Activated B cell treated with CpG ODN at 0.5 μM for 24 hours (primary cell): ENCODE measurements at regions of chr6 and their contacts with region 1.

Region 1: GRCh38 chr6:25223490-25223991 is 55.6 kb upstream of the CARMIL1 start:
- DNase-seq: peak; percentile 28
- ATAC-seq: peak; percentile 50
- H3K4me3 Mint-ChIP-seq: peak overlapping the region; percentile 65
- H3K27ac Mint-ChIP-seq: no peak overlapping the region
- H3K4me1 Mint-ChIP-seq: peaks cover 7% of the 10 kb centered on the region
- H3K27me3 Mint-ChIP-seq: peaks cover 5% of the 10 kb centered on the region
- CTCF ChIP-seq: peak; percentile 65

Region 2: DNA sequence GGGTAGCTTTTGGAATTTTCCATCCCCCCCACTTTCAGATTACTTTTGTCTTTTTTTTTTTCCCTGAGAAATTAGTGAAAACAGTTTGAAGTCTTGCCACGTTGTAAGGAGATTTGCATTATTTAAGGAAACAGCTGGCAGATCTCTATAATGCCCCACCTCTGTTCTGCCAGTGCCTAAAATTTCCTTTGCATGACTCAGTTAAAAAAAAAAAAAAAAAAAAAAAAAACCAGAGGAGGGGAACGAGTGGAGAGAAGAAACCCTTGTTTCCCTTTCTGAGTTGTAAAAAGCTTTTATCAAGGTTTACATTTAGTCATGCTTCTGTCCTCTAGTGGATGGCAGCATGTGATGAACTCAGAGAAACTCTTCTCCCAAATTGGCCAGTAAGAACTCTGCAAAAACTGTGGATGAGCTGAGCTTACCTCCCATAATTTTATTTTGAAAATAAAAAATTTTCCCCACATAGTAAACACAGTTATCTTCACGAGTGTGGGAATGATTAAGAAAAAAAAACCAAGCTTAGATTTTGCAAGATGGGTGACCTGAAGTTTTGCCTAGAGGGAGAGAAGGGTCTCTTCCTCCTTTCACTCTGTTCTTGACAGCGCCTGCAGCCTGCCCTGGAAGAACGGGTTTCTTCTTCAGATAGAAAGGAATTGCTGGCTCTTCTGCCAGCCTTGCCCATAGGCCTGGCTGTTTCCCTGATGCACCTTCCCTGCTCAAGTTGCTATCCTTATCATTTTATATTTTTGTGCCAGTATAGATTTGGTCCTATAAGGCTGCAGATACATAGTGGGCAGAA is 89.4 kb after region 1 on chr6:
- CTCF ChIA-PET with region 1: no interaction called
- POLR2A ChIA-PET with region 1: no interaction called
- intact Hi-C with region 1: no loop called
- DNase-seq: no peak
- ATAC-seq: no peak
- H3K4me3 Mint-ChIP-seq: no peak overlapping the region
- H3K27ac Mint-ChIP-seq: no peak overlapping the region
- H3K4me1 Mint-ChIP-seq: peaks cover 16% of the 10 kb centered on the region
- H3K27me3 Mint-ChIP-seq: no peaks in the 10 kb centered on the region
- CTCF ChIP-seq: no peak

Region 3: GRCh38 chr6:25490018-25490801 is 266.7 kb after region 1 on chr6:
- CTCF ChIA-PET with region 1: interaction called, 35 read pairs
- POLR2A ChIA-PET with region 1: no interaction called
- intact Hi-C with region 1: loop called (anchors 1 kb)
- DNase-seq: peak; percentile 43
- ATAC-seq: peak; percentile 81
- H3K4me3 Mint-ChIP-seq: no peak overlapping the region
- H3K27ac Mint-ChIP-seq: no peak overlapping the region
- H3K4me1 Mint-ChIP-seq: peaks cover 8% of the 10 kb centered on the region
- H3K27me3 Mint-ChIP-seq: no peaks in the 10 kb centered on the region
- CTCF ChIP-seq: no peak

Region 4: DNA sequence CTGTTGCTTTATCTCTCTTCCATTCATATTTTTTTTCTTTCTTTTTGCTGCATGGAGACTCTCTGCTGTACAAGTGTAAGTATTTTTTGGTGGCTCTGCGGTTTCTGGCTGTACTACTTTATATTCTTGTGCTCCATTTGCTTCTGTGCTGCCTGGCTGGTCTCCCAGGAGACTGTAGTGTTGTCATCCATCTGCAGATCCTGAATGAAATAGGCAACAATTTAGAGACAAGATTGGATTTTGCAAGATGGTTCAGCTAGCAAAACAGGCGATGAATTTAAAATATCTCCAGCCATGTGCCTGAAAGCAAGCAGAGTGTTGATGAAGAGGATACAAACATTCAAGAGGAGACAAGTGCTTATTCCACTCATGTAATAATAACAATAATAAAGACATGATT is 353.4 kb after region 1 on chr6:
- CTCF ChIA-PET with region 1: no interaction called
- POLR2A ChIA-PET with region 1: no interaction called
- intact Hi-C with region 1: no loop called
- DNase-seq: no peak
- ATAC-seq: no peak
- H3K4me3 Mint-ChIP-seq: no peak overlapping the region
- H3K27ac Mint-ChIP-seq: no peak overlapping the region
- H3K4me1 Mint-ChIP-seq: peaks cover 5% of the 10 kb centered on the region
- H3K27me3 Mint-ChIP-seq: no peaks in the 10 kb centered on the region
- CTCF ChIP-seq: no peak

Region 5: DNA sequence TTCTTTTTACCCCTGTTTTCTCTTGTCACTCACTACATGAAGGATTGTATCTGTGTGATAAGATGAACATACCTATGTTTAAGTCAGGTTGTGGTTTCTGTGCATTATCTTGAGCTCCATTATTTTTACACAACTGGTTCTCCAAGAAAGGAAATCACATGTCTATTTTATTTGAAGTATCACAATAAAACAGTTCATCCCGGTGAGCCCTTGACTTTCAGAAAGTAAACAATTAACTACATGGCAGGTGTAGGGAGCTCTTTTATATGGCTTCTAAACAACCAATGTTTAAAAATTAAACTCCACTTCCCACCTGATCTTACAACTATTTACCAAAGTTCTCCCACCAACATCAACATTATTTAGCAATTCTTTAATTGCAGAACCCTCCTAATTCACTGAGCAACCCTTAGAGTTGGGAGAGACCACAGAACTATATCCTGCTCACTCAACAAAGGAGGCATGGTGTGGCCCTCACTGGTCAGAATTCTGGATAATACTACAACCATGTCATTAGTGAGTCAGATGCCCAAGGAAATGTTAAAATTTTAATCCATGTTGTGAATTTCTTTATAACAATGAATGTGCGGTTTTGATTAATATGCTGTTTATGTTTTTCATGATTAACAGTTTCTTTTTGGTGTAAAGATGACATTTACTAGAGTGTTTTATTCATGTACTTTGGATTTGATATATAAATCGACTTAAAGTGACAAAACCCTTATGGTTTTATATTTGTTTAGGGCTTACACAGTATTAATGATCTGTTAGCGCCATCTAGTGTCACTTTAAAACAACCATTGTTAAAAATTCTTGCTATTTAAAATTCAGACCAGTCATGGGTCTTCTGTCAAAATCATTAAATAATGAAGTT is 378.5 kb after region 1 on chr6:
- CTCF ChIA-PET with region 1: interaction called, 15 read pairs
- POLR2A ChIA-PET with region 1: no interaction called
- intact Hi-C with region 1: loop called (anchors 1 kb)
- DNase-seq: no peak
- ATAC-seq: no peak
- H3K4me3 Mint-ChIP-seq: no peak overlapping the region
- H3K27ac Mint-ChIP-seq: no peak overlapping the region
- H3K4me1 Mint-ChIP-seq: no peaks in the 10 kb centered on the region
- H3K27me3 Mint-ChIP-seq: no peaks in the 10 kb centered on the region
- CTCF ChIP-seq: peak; percentile 41

Region 6: GRCh38 chr6:25942561-25943147 is 719.1 kb after region 1 on chr6:
- CTCF ChIA-PET with region 1: no interaction called
- POLR2A ChIA-PET with region 1: no interaction called
- intact Hi-C with region 1: loop called (anchors 2 kb)
- DNase-seq: no peak
- ATAC-seq: peak; percentile 60
- H3K4me3 Mint-ChIP-seq: no peak overlapping the region
- H3K27ac Mint-ChIP-seq: no peak overlapping the region
- H3K4me1 Mint-ChIP-seq: peaks cover 16% of the 10 kb centered on the region
- H3K27me3 Mint-ChIP-seq: peaks cover 6% of the 10 kb centered on the region
- CTCF ChIP-seq: no peak